PC-9 (cell line): ENCODE measurements at regions of chr20 and their contacts with region 1.

Region 1: GRCh38 chr20:19995220-19995863 is 21.8 kb upstream of the NAA20 start:
- DNase-seq: no peak
- H3K4me3 ChIP-seq: no peak overlapping the region
- H3K27ac ChIP-seq: peak overlapping the region; percentile 100
- H3K4me1 ChIP-seq: peaks cover 51% of the 10 kb centered on the region
- H3K27me3 ChIP-seq: no peaks in the 10 kb centered on the region
- CTCF ChIP-seq: peak; percentile 93

Region 2: DNA sequence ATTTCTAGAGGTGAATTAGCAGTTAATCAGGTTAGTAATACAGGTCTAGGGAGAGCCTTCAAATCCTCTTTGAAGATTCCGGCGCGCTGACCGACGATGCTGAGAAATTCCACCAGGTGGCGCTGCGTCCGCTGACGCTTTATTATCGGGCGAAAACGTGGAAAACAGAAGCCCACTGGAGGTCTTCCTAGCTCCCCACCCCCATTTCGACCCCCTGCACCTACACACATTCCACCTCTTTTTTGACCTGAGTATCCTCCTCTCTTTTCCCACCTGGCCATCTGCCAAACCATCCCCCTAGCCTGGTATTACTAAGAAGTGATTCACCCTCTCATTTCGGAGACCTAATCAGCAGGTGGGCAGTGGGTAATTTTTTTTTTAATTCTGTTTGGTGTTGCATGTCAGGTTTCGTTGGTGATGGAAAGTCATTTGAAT is 302.6 kb before region 1 on chr20:
- CTCF ChIA-PET with region 1: no interaction called
- POLR2A ChIA-PET with region 1: no interaction called
- intact Hi-C with region 1: loop called (anchors 1 kb)
- DNase-seq: peak; percentile 70 to 72
- H3K4me3 ChIP-seq: peak overlapping the region; percentile 34; the same call in 1 of the 2 replicates
- H3K27ac ChIP-seq: peak overlapping the region; percentile 45
- H3K4me1 ChIP-seq: peaks cover 10% of the 10 kb centered on the region
- H3K27me3 ChIP-seq: no peaks in the 10 kb centered on the region
- CTCF ChIP-seq: peak; percentile 98

Region 3: GRCh38 chr20:19784511-19785172 is 210.7 kb before region 1 on chr20:
- CTCF ChIA-PET with region 1: no interaction called
- POLR2A ChIA-PET with region 1: interaction called, 5 read pairs
- intact Hi-C with region 1: loop called (anchors 1 kb)
- DNase-seq: peak; percentile 90 to 92
- H3K4me3 ChIP-seq: peak overlapping the region; percentile 29; the same call in 1 of the 2 replicates
- H3K27ac ChIP-seq: peak overlapping the region; percentile 91
- H3K4me1 ChIP-seq: peaks cover 44% of the 10 kb centered on the region
- H3K27me3 ChIP-seq: no peaks in the 10 kb centered on the region
- CTCF ChIP-seq: peak; percentile 93

Region 4: GRCh38 chr20:19815553-19815991 is 179.8 kb before region 1 on chr20:
- CTCF ChIA-PET with region 1: no interaction called
- POLR2A ChIA-PET with region 1: no interaction called
- intact Hi-C with region 1: loop called (anchors 1 kb)
- DNase-seq: peak; percentile 68 to 96
- H3K4me3 ChIP-seq: no peak overlapping the region
- H3K27ac ChIP-seq: peak overlapping the region; percentile 95
- H3K4me1 ChIP-seq: peaks cover 32% of the 10 kb centered on the region
- H3K27me3 ChIP-seq: no peaks in the 10 kb centered on the region
- CTCF ChIP-seq: no peak

Region 5: GRCh38 chr20:19889011-19889953 is 106.1 kb before region 1 on chr20:
- CTCF ChIA-PET with region 1: interaction called, 7 read pairs
- POLR2A ChIA-PET with region 1: interaction called, 13 read pairs
- intact Hi-C with region 1: loop called (anchors 1 kb)
- DNase-seq: no peak
- H3K4me3 ChIP-seq: no peak overlapping the region
- H3K27ac ChIP-seq: no peak overlapping the region
- H3K4me1 ChIP-seq: peaks cover 25% of the 10 kb centered on the region
- H3K27me3 ChIP-seq: no peaks in the 10 kb centered on the region
- CTCF ChIP-seq: no peak

Region 6: DNA sequence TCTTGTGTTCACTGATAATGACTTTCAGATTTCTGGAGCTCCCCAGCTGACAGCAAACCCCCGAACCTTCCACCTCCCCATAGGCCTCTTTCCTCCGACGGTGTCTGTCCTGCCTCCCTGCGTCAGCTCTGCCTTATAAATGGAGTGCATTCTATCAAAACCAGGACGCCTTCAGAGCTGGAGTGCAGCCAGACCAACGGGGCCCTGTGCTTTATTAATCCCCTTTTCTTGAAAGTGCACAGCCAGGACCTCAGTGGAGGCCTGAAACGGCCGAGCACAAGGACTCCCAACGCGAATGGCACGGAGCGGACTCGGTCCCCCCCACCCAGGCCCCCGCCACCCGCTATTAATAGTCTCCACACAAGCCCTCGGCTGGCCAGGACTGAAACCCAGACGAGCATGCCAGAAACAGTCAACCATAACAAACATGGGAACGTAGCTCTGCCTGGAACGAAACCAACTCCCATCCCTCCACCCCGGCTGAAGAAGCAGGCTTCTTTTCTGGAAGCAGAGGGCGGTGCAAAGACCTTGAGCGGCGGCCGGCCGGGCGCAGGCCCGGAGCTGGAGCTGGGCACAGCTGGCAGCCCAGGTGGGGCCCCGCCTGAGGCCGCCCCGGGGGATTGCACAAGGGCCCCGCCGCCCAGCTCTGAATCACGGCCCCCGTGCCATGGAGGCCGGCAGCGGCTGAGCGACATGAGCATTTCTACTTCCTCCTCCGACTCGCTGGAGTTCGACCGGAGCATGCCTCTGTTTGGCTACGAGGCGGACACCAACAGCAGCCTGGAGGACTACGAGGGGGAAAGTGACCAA is 20.5 kb before region 1 on chr20:
- CTCF ChIA-PET with region 1: interaction called, 9 read pairs
- POLR2A ChIA-PET with region 1: interaction called, 26 read pairs
- intact Hi-C with region 1: loop called (anchors 1 kb)
- DNase-seq: peak; percentile 84 to 93
- H3K4me3 ChIP-seq: peak overlapping the region; percentile 93
- H3K27ac ChIP-seq: peak overlapping the region; percentile 95
- H3K4me1 ChIP-seq: peaks cover 47% of the 10 kb centered on the region
- H3K27me3 ChIP-seq: no peaks in the 10 kb centered on the region
- CTCF ChIP-seq: no peak